Ascending aorta (tissue), 2 donors: ENCODE measurements at regions of chr18 and their contacts with region 1.

Region 1: DNA sequence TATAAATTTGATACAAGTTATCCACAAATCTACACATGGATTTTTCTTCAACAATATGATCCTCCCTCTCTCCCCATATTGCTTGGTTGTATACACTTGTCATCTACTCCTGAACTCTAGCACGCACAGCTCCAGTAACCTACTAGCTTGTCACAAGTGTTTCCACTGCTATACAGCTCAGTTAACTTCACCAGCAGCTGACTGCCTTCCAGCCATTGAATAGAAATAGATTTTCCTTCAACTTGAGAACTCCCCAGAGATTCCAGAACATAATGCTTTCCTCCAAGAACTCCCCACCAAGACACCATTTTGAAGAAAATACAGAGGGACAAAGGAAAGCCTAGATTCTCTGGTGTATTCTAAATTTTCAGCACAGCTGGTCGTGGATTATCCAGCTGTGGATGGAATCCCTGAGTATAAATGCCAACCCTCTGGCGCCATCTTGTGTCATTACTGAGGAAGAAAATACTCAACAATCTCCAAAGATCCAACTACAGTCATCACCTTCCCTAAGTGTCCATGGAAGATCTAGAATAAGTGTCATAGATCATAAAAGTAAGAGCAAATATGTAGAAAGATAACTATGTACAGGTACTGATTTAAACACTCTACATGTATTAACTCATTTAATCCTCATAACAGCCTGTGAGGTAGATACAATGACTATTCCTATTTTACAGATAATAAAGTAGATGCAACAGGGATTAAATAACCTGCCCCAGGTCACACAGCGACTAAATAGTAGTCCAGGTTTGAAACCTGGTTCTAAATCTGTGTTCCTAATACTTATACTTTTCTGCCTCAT is 156.7 kb downstream of the ARHGAP28 start:
- DNase-seq: no peak
- H3K4me3 ChIP-seq: no peak overlapping the region
- H3K27ac ChIP-seq: no peak overlapping the region
- H3K4me1 ChIP-seq: no peaks in the 10 kb centered on the region
- H3K27me3 ChIP-seq: no peaks in the 10 kb centered on the region
- CTCF ChIP-seq: peak; percentile 27 to 56 (median 37)

Region 2: GRCh38 chr18:5879479-5879882 is 1006.7 kb before region 1 on chr18:
- intact Hi-C with region 1: loop called (anchors 5 kb)
- DNase-seq: no peak
- H3K4me3 ChIP-seq: no peak overlapping the region
- H3K27ac ChIP-seq: no peak overlapping the region
- H3K4me1 ChIP-seq: no peaks in the 10 kb centered on the region
- H3K27me3 ChIP-seq: no peaks in the 10 kb centered on the region
- CTCF ChIP-seq: peak; percentile 28 to 53 (median 44)

Region 3: DNA sequence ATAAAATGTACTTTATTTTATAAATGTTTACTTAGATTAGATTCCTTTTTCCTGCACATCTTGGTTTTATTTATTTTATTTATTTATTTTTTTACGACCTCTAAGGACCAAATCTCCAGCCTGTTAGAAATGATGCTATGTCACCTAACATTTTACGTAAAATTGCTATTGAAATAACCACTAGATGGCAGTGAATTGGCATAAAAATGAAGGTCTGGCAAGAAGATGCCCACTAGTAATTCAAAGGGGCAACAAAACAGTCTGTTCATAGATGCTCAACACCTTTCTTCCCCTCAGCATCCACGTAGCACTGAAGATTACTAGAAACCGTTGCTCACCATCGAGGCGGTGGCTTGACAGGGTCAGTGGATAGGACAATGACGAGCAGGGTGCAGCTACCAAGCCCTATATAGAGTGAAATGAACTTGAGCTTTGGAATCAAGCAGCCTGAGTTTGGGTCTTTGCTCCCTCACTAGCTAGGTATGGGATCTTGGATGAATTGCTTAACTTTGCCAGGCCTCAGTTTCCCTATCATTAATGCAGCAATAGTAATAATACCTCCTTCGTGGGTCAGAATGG is 342.8 kb before region 1 on chr18:
- intact Hi-C with region 1: loop called (anchors 10 kb)
- DNase-seq: no peak
- H3K4me3 ChIP-seq: no peak overlapping the region
- H3K27ac ChIP-seq: no peak overlapping the region
- H3K4me1 ChIP-seq: no peaks in the 10 kb centered on the region
- H3K27me3 ChIP-seq: no peaks in the 10 kb centered on the region
- CTCF ChIP-seq: peak in 2 of 3 experiments; percentile 8 to 29

Region 4: DNA sequence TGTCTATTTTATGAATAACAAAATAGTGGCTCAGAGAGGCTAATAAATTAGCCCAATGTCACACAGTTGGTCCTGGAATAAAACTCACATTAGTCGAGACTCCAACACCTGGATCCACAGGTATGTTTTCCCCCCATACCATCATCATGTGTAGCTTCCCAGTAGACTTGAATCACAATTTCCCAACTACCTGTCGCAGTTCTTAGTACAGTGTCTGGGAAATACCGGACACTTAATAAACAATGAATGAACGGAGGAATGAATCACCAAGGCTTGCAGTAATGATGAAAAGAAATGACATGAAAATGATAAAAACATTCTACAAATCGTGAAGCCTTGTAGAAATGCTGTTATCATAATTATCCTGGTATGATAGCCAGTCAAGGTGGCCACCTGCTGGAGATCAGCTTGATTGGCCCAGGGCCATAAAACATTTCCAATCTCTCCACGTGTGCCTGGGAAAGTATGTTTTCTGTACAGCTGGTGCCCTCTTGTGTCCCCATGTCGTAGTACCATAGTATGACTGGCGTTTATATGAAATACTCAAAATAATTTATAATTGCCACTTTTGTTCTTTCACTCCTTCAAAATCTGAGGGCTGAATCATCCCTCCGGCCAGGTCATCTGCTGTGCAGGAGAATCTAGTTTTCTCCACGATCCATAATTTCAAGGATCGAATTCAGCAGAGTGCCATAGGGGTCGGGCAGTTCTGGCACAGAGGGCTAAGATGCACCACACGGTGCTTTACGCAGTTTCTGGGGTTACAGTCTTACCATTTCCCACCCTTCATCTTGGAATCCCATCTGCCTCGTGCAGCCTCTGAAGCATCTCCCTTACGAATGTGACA is 136.0 kb after region 1 on chr18:
- intact Hi-C with region 1: no loop called
- DNase-seq: no peak
- H3K4me3 ChIP-seq: no peak overlapping the region
- H3K27ac ChIP-seq: no peak overlapping the region
- H3K4me1 ChIP-seq: no peaks in the 10 kb centered on the region
- H3K27me3 ChIP-seq: no peaks in the 10 kb centered on the region
- CTCF ChIP-seq: no peak